AG04450 (cell line): ENCODE measurements at regions of chr16 and their contacts with region 1.

Region 1: DNA sequence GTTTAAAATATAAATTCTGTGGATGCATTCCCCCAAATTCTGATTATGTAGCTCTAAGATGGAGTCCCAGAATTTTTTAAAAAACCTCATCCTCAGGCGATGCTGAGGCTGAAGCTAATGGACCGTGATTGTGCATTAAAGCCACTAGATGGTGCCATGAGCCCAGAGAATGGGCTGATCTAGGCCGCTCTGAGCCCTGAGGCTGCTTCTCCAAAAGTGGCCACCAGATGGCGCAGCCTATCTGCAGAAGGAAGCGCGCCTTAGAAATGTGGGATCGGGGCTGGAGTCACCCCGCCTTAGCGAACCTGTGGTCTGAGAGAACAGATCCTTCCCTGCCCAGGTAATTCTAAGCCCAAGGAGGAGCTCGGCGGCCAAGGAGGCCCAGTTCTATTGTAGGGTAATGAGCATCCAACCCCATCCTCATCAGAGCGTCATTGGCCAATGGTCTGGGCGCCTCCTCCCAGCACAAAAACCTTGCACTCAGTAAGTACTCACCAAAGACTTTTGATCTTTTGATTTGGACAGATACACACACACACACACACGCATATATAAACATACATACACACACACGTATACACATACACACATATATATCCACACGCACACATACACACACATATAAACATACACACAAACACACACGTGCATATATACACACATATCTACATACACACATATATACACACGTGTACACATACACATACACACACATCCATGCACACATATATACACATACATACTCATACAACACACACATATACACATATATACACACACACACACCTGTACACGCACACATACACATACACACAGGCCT is 13.7 kb upstream of the MMP2 start:
- DNase-seq: peak; percentile 72
- H3K4me3 ChIP-seq: peak overlapping the region; percentile 29; the same call in 1 of the 2 replicates
- H3K27ac ChIP-seq: no peak overlapping the region
- H3K27me3 ChIP-seq: no peaks in the 10 kb centered on the region
- CTCF ChIP-seq: peak; percentile 99

Region 2: GRCh38 chr16:55035029-55035428 is 430.3 kb before region 1 on chr16:
- CTCF ChIA-PET with region 1: no interaction called
- POLR2A ChIA-PET with region 1: no interaction called
- DNase-seq: no peak
- H3K4me3 ChIP-seq: no peak overlapping the region
- H3K27ac ChIP-seq: no peak overlapping the region
- H3K27me3 ChIP-seq: no peaks in the 10 kb centered on the region
- CTCF ChIP-seq: peak; percentile 24; the same call in 1 of the 2 replicates

Region 3: DNA sequence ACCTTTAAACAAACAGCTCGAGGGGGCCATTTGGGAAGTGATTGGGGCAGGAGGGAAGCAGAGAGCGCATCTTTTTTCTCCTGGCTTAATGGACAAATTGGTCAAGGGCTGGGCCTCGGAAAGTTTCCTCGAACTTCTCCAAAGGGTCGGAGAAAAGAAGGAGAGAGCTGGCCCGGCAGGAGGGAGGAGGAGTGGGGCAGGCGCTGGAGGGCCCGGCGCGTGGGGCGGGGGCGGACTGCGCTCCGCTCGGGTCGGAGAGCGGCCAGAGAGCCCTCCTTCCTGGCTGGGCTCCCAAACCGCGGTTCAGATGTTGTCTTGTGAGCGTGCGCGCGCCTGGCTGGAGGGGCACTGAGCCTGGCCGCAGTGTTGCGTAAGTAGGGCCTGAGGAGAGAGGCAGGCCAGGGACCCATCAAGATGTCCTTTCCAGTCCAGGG is 15.0 kb after region 1 on chr16:
- CTCF ChIA-PET with region 1: interaction called, 45 read pairs
- POLR2A ChIA-PET with region 1: interaction called, 3 read pairs
- DNase-seq: peak; percentile 84
- H3K4me3 ChIP-seq: peak overlapping the region; percentile 94
- H3K27ac ChIP-seq: peak overlapping the region; percentile 87
- H3K27me3 ChIP-seq: no peaks in the 10 kb centered on the region
- CTCF ChIP-seq: no peak

Region 4: DNA sequence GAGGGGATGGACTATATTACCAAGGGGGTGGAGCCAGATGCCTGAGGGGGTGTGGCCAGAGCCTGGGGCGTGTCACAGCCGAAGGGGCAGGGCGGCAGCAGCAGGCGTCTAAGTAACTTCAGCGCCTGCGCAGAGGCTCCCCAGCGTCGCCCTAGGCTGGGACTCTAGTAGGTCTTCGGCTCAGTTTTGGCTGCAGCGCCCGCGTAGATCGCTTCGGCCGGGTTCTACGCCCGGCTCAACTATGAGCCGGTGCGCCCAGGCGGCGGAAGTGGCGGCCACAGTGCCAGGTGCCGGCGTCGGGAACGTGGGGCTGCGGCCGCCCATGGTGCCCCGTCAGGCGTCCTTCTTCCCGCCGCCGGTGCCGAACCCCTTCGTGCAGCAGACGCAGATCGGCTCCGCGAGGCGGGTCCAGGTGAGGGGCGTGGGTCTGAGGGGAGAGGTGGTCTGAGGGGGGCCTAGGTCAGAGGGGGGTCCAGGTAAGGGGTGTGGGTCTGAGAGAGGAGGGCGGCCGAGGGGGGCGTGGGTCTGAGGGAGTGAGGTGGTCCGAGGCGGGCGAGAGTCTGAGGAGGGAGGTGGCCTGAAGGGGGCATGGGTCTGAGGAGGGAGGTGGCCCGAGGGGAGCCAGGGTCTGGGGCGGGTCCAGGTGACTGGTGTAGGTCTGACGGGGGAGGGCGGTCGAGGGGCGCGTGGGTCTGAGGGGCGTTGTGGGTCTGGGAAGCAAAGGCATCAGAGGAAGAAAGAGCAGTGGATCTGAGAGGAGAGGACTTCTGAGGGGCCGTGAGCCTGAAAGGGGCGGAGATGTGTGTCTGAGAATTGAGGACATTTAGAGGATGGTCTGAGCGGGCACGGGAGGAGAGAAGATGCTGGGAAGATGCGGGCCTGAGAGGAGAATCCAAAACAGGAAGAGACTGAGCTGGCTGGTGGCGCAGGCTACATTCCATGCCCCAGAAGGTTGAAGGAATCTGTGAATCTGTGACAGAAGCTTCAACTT is 43.9 kb after region 1 on chr16 and contains the start of gene LPCAT2:
- CTCF ChIA-PET with region 1: interaction called, 76 read pairs
- POLR2A ChIA-PET with region 1: no interaction called
- DNase-seq: peak; percentile 67
- H3K4me3 ChIP-seq: peak within 1 kb of the TSS; percentile 70
- H3K27ac ChIP-seq: no peak within 1 kb of the TSS
- H3K27me3 ChIP-seq: no peaks in the 10 kb centered on the region
- CTCF ChIP-seq: no peak
- polyA plus RNA-seq, gene LPCAT2: 10.5 and 20.6 TPM in 2 replicates

Region 5: GRCh38 chr16:55552621-55553020 is 87.3 kb after region 1 on chr16:
- CTCF ChIA-PET with region 1: interaction called, 252 read pairs
- POLR2A ChIA-PET with region 1: no interaction called
- DNase-seq: no peak
- H3K4me3 ChIP-seq: no peak overlapping the region
- H3K27ac ChIP-seq: no peak overlapping the region
- H3K27me3 ChIP-seq: no peaks in the 10 kb centered on the region
- CTCF ChIP-seq: no peak

Region 6: DNA sequence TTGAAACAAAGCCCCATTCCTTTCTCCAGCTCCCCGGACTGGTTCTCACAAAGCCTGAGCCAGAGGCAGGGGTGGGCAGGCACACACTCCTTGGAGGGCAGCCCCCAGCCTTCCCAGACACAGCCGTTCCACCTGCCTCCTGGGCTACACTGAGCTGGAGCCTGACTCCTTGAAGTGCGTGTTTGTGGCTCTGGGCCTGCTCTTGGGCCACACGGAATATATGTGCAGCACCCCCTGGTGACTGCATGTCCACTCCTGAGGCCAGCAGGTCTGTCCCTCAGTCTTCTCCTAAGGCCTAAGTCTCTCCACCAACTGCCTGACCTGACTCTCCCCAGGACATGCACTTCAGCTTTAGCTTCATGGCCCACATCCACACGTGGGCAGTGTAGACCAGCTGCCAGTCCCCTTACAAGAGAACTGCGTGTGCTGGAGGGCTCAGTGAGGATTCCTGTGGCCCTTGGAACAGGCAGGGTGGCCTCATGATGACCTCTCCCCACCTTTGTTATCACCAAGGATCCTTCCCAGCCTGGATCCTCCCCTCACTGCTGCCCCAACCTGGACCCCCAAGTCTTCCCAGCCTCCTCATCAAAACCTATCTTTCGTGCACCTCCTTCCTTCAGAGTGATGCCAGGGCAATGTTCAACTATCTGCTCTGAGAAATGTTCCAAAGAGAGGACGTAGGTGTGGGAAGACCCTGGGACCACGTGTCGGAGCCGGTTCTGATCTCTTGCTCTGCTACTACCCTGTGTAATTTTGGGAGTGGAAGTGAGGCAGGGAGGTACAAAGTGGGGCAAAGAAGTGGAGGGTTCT is 178.1 kb after region 1 on chr16:
- CTCF ChIA-PET with region 1: interaction called, 20 read pairs
- POLR2A ChIA-PET with region 1: no interaction called
- DNase-seq: no peak
- H3K4me3 ChIP-seq: no peak overlapping the region
- H3K27ac ChIP-seq: no peak overlapping the region
- H3K27me3 ChIP-seq: peaks cover 45% of the 10 kb centered on the region
- CTCF ChIP-seq: peak; percentile 28; the same call in 1 of the 2 replicates

Region 7: GRCh38 chr16:55842369-55843104 is 377.2 kb after region 1 on chr16:
- CTCF ChIA-PET with region 1: interaction called, 27 read pairs
- POLR2A ChIA-PET with region 1: no interaction called
- DNase-seq: peak; percentile 10
- H3K4me3 ChIP-seq: no peak overlapping the region
- H3K27ac ChIP-seq: no peak overlapping the region
- H3K27me3 ChIP-seq: peaks cover 4% of the 10 kb centered on the region
- CTCF ChIP-seq: peak; percentile 69